Left ventricle myocardium superior (tissue), 1 donor: ENCODE measurements at regions of chr1 and their contacts with region 1.

Region 1: GRCh38 chr1:71049951-71050598 is 2.5 kb upstream of the PTGER3 start:
- DNase-seq: no peak
- ATAC-seq: peak; percentile 39

Region 2: GRCh38 chr1:70528590-70529333 is 521.3 kb before region 1 on chr1:
- intact Hi-C with region 1: loop called (anchors 2 kb)
- DNase-seq: no peak
- ATAC-seq: peak; percentile 65

Region 3: GRCh38 chr1:70552662-70553566 is 497.2 kb before region 1 on chr1:
- intact Hi-C with region 1: no loop called
- DNase-seq: no peak
- ATAC-seq: no peak

Region 4: GRCh38 chr1:70685300-70686241 is 364.5 kb before region 1 on chr1:
- intact Hi-C with region 1: loop called (anchors 2 kb)
- DNase-seq: peak; percentile 39
- ATAC-seq: peak; percentile 89